Sigmoid colon (tissue), 7 donors: ENCODE measurements at regions of chr7 and their contacts with region 1.

Region 1: GRCh38 chr7:2555121-2556052 is at the start of gene BRAT1:
- DNase-seq: peak; percentile 98
- H3K4me3 ChIP-seq: peak within 1 kb of the TSS; percentile 55 to 75 (median 72)
- H3K27ac ChIP-seq: peak within 1 kb of the TSS; percentile 85 to 98 (median 94)
- H3K4me1 ChIP-seq: peaks cover 0 to 49% (median 45%) of the 10 kb centered on the region in 4 donors
- H3K27me3 ChIP-seq: no peaks in the 10 kb centered on the region
- CTCF ChIP-seq: peak; percentile 13 to 52 (median 18)
- EP300 ChIP-seq: no peak
- POLR2A ChIP-seq: peak; percentile 41 to 59
- total RNA-seq, gene BRAT1: 17.8 to 24.6 (median 22.1) TPM

Region 2: GRCh38 chr7:2403014-2403717 is 152.2 kb before region 1 on chr7 and contains the start of gene CHST12:
- intact Hi-C with region 1: loop called (anchors 5 kb)
- DNase-seq: peak; percentile 97
- H3K4me3 ChIP-seq: peak within 1 kb of the TSS; percentile 85 to 97 (median 88)
- H3K27ac ChIP-seq: peak within 1 kb of the TSS; percentile 74 to 84 (median 82)
- H3K4me1 ChIP-seq: peaks cover 0 to 43% (median 33%) of the 10 kb centered on the region in 4 donors
- H3K27me3 ChIP-seq: no peaks in the 10 kb centered on the region
- CTCF ChIP-seq: no peak
- EP300 ChIP-seq: no peak
- POLR2A ChIP-seq: no peak
- total RNA-seq, gene CHST12: 7.5 to 10.9 (median 10.4) TPM

Region 3: DNA sequence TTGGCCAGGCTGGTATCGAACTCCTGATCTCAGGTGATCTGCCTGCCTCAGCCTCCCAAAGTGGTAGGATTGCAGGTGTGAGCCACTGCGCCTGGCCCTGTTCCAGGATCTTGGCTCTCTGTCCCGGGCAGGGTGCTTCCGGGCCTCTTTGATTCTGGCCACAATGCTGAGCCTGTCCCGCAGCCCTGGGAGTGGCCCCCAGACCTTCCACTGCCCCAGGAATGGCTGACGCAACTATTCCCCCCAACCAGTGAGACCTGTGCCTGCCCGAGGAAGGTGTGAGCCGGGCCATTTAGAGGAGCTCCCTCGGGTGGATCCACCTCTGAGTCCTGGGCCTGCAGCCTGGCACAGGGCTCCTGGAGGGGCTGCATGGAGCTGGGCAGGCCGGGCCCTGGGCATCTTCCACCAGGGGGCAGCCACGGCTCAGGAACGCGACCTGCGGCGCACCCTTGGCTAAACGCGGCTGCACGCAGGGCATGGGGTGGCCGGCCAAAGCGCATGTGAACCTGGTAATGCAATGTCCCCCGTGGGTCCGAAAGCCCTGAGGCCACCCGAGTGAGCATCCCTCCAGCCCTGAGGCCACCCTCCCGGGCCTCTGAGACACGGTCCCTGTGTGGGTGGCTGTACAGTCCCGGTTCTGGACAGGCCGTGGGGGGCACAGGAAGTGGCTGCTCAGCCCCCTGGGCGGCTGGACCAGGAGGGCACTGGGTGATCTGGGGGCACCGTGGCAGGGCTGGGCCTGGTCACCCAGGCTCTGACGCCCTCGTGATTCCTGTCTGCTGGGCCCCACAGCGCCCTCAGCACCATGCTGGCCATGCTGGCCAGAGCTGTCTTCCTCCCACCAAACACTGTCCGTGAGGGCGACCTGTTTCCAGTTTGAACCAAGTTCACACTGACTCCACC is 104.0 kb before region 1 on chr7:
- intact Hi-C with region 1: loop called (anchors 5 kb)
- DNase-seq: peak; percentile 89
- H3K4me3 ChIP-seq: peak overlapping the region; percentile 15 to 50 (median 38)
- H3K27ac ChIP-seq: peak overlapping the region in 1 of 4 donors; percentile 43
- H3K4me1 ChIP-seq: peaks cover 0 to 12% (median 11%) of the 10 kb centered on the region in 4 donors
- H3K27me3 ChIP-seq: no peaks in the 10 kb centered on the region
- CTCF ChIP-seq: peak; percentile 65 to 89 (median 76)
- EP300 ChIP-seq: no peak
- POLR2A ChIP-seq: no peak

Region 4: GRCh38 chr7:2519119-2519930 is 36.1 kb before region 1 on chr7 and contains the start of gene LFNG:
- intact Hi-C with region 1: loop called (anchors 2 kb)
- DNase-seq: peak; percentile 90
- H3K4me3 ChIP-seq: peak within 1 kb of the TSS; percentile 23 to 57 (median 49)
- H3K27ac ChIP-seq: peak within 1 kb of the TSS; percentile 2 to 57 (median 54)
- H3K4me1 ChIP-seq: peaks cover 0 to 55% (median 36%) of the 10 kb centered on the region in 4 donors
- H3K27me3 ChIP-seq: peaks cover 38 to 50% (median 47%) of the 10 kb centered on the region in 3 donors
- CTCF ChIP-seq: no peak
- EP300 ChIP-seq: no peak
- POLR2A ChIP-seq: no peak
- total RNA-seq, gene LFNG: 1.8 to 5.8 (median 5.3) TPM

Region 5: DNA sequence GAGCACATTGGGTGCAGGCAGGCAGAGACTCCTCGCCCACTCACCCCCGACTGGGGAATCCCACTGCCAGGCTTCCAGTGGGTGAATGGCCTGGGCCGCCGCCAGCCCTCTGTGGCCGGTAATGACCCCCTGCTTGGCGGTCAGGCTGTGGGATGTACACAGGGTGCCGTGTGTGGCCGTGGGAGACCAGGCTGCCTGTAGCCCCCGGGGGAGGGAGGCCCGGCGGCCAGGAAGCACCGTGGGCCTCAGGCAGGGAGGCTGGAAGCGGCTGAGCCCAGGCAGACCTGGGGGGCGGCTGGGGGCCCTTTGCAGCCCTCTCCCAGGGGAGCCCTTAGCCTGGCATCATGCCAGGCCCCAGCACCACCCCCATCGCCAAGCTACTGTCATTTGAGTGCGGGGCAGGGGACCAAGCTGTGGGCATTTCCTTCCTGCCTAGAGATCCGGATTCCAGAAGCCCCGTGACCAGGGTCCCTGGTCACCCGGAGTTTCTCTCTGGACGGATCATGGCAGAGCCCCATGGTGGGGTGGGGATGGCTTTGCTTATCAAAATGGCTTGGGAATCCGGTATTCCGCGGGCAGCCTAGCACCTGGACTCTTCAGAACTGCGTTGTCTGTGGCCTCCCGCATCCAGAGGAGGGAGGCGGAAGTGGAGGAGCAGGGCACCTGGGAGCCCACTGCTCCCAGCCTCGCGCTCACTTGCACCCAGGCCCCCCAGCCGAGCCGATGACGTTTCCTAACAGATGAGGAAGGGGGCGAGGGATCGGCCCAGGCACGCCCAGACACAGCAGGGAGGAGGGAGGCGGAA is 77.5 kb after region 1 on chr7:
- intact Hi-C with region 1: loop called (anchors 5 kb)
- DNase-seq: peak; percentile 85
- H3K4me3 ChIP-seq: peak overlapping the region; percentile 67 to 99 (median 80)
- H3K27ac ChIP-seq: peak overlapping the region; percentile 77 to 85 (median 82)
- H3K4me1 ChIP-seq: peaks cover 0 to 60% (median 46%) of the 10 kb centered on the region in 4 donors
- H3K27me3 ChIP-seq: no peaks in the 10 kb centered on the region
- CTCF ChIP-seq: no peak
- EP300 ChIP-seq: no peak
- POLR2A ChIP-seq: no peak

Region 6: DNA sequence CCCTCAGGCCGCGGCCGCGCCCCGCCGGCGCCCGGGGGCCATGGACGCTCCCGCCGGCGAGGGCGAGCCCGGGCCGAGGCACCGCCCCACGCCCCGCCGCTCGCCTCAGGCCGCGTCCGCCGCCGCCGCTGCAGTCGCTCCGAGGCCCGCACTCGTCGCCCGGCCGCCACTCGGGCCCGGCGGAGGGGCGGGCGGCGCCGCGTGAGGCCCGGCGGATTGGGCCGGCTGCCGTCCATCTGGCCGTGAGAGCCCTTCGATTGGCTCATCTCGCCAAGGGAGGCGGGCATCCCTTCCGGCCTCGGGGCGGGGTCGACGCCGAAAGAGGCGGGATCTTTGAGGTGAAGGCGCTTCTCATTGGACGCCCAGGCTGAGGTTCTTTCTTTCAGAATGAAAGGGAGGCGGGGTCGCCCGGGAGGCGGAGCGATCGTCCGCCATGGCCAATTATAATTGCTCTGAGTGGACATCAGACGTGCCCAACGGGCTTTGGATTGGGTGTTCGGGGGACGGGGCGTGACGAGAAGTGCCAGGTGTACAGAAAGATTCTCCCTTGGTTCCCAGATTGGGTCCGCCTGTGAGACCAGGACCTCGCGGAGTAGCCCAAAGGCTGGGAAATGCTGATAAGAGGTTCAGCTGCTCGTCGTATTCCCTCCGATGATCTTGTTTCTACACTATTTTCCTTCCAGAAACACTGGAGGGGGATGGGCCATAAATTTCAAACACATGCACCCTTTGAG is 288.9 kb after region 1 on chr7 and contains the start of gene GNA12:
- intact Hi-C with region 1: loop called (anchors 5 kb)
- DNase-seq: peak; percentile 99
- H3K4me3 ChIP-seq: peak within 1 kb of the TSS; percentile 58 to 74 (median 62)
- H3K27ac ChIP-seq: peak within 1 kb of the TSS; percentile 68 to 83 (median 76)
- H3K4me1 ChIP-seq: peaks cover 0 to 44% (median 32%) of the 10 kb centered on the region in 4 donors
- H3K27me3 ChIP-seq: no peaks in the 10 kb centered on the region
- CTCF ChIP-seq: no peak
- EP300 ChIP-seq: no peak
- POLR2A ChIP-seq: no peak
- total RNA-seq, gene GNA12: 21.4 to 46.5 (median 24.6) TPM